OCI-LY7 (cell line): ENCODE measurements at regions of chr17 and their contacts with region 1.

Region 1: DNA sequence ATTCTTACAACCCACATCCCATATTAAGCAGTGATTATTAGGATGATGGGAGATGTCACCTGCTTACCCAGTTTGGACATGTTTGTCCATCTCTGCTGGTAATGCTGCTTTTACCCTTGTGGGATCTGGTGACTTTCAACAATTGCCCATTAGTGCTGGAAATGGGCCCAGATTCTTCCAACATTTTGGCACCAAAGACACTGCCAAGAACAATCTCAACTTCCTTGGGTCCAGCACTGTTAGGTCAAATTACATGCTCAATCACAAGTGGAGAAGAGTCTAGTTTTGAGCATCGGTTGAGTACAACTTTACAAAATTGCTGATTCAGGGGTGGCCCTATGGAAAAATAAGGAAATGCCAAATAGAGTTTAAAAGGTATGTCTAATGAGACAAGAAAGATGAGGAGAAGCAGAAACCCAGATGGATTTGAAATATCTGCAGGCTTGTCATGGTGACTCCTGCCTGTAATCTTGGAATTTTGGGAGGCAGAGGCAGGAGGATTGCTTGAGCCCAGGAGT is 13.0 kb upstream of the ZFP3 start:
- DNase-seq: no peak
- H3K4me3 ChIP-seq: no peak overlapping the region
- H3K27ac ChIP-seq: no peak overlapping the region
- H3K4me1 ChIP-seq: peaks cover 6% of the 10 kb centered on the region
- CTCF ChIP-seq: no peak

Region 2: GRCh38 chr17:4903051-4903818 is 162.1 kb before region 1 on chr17 and contains the start of gene CHRNE:
- CTCF ChIA-PET with region 1: no interaction called
- POLR2A ChIA-PET with region 1: no interaction called
- intact Hi-C with region 1: loop called (anchors 1 kb)
- DNase-seq: peak; percentile 85
- H3K4me3 ChIP-seq: no peak within 1 kb of the TSS
- H3K27ac ChIP-seq: no peak within 1 kb of the TSS
- H3K4me1 ChIP-seq: peaks cover 9% of the 10 kb centered on the region
- CTCF ChIP-seq: peak; percentile 83
- total RNA-seq, gene CHRNE: 0.32 and 0.59 TPM in 2 replicates

Region 3: DNA sequence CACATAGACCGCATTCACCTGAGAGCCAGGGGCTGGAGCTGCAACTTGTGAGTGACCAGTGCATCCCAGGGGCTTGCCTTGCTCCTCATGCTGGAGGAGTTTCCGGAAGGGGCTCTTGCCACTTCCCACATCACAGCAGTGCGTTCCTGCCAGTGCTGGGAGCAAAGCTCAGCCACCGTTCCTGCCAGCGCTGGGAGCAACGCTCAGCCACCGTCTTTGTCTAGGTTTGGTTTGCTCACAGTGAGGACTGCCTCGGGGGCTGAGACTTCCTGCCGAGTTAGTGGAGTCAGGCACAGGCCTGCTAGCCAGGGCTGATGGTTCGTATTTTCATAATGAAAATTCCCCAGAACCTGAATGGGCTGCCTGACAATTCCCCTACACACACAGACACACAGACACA is 157.0 kb before region 1 on chr17:
- CTCF ChIA-PET with region 1: no interaction called
- POLR2A ChIA-PET with region 1: no interaction called
- intact Hi-C with region 1: loop called (anchors 1 kb)
- DNase-seq: no peak
- H3K4me3 ChIP-seq: no peak overlapping the region
- H3K27ac ChIP-seq: no peak overlapping the region
- H3K4me1 ChIP-seq: peaks cover 3% of the 10 kb centered on the region
- CTCF ChIP-seq: no peak

Region 4: DNA sequence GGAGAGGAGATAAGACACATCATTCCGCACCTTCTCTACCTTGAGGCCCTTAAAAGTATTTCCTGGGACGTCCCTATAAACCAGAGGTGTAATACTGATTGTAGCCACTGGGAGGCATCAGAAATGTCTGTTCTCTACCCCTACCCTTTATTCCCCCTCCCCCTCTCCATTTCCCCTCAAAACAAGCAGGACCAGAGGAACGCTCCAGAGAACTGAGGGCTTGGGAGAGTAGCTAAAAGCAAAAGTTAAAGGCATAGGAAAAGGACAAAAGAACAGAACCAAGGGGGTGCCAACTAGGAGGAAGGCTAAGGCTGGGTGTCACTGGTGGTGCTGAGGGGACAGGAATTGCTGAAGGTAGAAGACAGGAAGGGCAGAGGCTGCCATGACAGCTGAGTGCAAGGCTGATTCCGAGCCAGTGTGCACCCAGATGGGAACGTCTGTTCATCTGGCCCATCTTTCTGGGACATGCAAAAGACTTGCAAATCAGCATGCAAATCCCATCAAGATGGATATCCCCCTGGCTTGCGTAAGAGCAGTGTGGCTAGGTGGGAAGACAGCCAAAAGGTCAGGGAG is 84.6 kb before region 1 on chr17:
- CTCF ChIA-PET with region 1: no interaction called
- POLR2A ChIA-PET with region 1: interaction called, 3 read pairs
- intact Hi-C with region 1: loop called (anchors 1 kb)
- DNase-seq: peak; percentile 83
- H3K4me3 ChIP-seq: no peak overlapping the region
- H3K27ac ChIP-seq: no peak overlapping the region
- H3K4me1 ChIP-seq: peaks cover 28% of the 10 kb centered on the region
- CTCF ChIP-seq: peak; percentile 90

Region 5: DNA sequence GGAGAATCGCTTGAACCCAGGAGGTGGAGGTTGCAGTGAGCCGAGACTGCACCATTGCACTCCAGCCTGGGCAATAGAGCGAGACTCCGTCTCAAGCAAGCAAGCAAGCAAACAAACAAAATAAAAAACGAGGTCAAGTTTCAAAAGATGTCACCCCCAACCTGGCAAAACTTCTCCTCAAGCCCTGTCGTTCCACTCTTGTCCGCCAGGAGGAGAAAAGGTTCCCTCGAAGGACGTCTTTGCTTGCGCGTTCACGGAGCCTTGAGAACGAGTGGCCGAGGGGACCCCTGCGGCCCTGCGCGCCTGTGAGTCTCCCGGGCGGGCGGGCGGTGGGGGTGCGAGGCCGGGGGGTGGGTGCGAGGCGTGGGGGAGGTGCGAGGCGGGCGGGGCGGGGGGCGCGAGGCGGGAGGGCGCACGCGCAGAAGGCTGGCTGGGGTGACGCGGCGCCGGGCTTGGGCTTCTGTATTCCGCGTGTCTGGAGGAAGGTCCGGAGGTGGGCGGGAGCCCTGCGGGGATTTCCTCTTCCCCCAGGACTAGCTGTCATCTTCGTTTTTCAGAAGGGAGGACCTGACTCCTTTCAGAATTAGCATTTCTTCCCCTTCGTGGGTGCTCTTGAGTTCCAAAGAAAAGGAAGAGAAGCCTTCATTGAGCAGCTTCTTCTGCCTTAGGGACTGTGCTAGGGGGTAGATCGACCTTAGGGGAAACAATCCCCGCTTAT is 33.8 kb before region 1 on chr17:
- CTCF ChIA-PET with region 1: interaction called, 5 read pairs
- POLR2A ChIA-PET with region 1: interaction called, 3 read pairs
- intact Hi-C with region 1: loop called (anchors 1 kb)
- DNase-seq: peak; percentile 91
- H3K4me3 ChIP-seq: peak overlapping the region; percentile 64
- H3K27ac ChIP-seq: peak overlapping the region; percentile 43
- H3K4me1 ChIP-seq: peaks cover 38% of the 10 kb centered on the region
- CTCF ChIP-seq: peak; percentile 72